GM10248 (cell line): ENCODE measurements at regions of chr9 and their contacts with region 1.

Region 1: GRCh38 chr9:95127249-95128176 is 190.0 kb downstream of the FANCC start:
- DNase-seq: peak; percentile 85
- CTCF ChIP-seq: peak; percentile 100

Region 2: GRCh38 chr9:94681508-94681907 is 446.0 kb before region 1 on chr9:
- CTCF ChIA-PET with region 1: interaction called, 282 read pairs
- POLR2A ChIA-PET with region 1: no interaction called
- DNase-seq: peak; percentile 70
- CTCF ChIP-seq: peak; percentile 63

Region 3: DNA sequence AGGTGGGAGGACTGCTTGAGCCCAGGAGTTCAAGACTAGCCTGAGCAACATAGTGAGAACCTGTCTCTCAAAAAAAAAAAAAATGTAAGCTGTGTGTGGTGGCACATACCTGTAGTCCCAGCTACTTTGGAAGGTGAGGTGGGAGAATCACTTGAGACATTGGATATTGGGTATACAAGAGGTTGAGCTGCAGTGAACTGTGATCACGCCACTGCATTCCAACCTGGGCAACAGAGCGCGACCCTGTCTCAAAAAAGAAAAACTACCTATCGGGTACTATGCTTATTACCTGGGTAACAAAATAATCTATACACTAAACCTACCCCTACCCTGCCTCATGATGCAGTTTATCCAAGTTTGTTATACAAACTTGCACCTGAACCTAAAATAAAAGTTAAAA is 336.1 kb before region 1 on chr9:
- CTCF ChIA-PET with region 1: interaction called, 114 read pairs
- POLR2A ChIA-PET with region 1: no interaction called
- DNase-seq: no peak
- CTCF ChIP-seq: no peak

Region 4: GRCh38 chr9:95116003-95116807 is 11.3 kb before region 1 on chr9:
- CTCF ChIA-PET with region 1: interaction called, 101 read pairs
- POLR2A ChIA-PET with region 1: no interaction called
- DNase-seq: no peak
- CTCF ChIP-seq: peak; percentile 15

Region 5: GRCh38 chr9:95143591-95144561 is 16.4 kb after region 1 on chr9:
- CTCF ChIA-PET with region 1: interaction called, 37 read pairs
- POLR2A ChIA-PET with region 1: no interaction called
- DNase-seq: no peak
- CTCF ChIP-seq: no peak

Region 6: GRCh38 chr9:95157481-95158151 is 30.1 kb after region 1 on chr9:
- CTCF ChIA-PET with region 1: interaction called, 19 read pairs
- POLR2A ChIA-PET with region 1: no interaction called
- DNase-seq: peak; percentile 66
- CTCF ChIP-seq: no peak

Region 7: DNA sequence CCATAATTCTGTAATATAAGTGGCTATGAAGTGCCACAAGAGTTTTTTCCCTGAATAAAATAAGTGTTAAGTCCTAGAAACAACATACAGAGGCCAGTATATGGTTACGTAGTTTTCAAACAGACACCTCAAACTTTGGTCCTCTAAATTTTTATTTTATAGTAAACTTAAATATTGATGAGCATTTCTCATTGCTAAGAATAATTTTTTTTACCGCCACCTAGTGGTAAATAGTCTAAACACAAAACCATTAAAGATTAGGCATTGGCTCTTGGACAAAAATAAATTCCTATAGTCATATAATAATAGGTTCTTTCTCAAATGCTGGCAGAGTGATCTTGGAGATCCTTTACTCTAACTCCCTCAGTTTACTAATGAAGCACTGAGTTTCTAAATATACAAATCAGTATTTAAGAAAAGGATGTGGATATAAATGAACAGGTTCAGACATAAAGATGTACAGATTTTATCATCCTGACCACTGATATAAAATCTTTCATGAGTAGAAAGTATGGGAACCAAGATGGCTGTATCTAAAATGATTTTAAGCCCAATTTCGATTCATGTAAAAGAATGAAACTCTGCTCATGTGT is 53.8 kb after region 1 on chr9:
- CTCF ChIA-PET with region 1: interaction called, 11 read pairs
- POLR2A ChIA-PET with region 1: no interaction called
- DNase-seq: peak; percentile 41
- CTCF ChIP-seq: peak; percentile 50